ENCODE measurements at regions of chr16 and their contacts with region 1.

Region 1: DNA sequence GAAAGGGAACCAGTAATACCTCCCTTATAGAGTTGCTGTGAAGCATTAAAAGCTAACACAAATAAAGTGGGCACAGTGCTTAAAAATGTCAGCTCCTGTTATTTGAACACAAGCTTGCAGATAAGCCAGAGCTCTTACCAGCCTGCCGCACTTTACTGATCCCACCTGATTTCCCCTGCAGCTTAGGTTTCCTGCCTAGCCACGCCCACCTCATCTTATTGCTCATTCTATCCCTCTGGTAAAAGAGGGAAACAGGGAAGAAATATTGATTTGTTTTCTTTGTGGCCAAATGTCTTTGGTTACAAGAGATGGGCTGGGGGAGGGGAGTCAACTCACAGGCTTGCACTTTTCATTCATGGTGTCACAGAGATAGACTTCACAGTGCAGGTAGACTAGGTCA is 9.6 kb upstream of the GP2 start:
- ATAC-seq: no peak
- H3K4me3 ChIP-seq: no peak overlapping the region
- H3K27ac ChIP-seq: no peak overlapping the region
- H3K4me1 ChIP-seq: no peaks in the 10 kb centered on the region

Region 2: DNA sequence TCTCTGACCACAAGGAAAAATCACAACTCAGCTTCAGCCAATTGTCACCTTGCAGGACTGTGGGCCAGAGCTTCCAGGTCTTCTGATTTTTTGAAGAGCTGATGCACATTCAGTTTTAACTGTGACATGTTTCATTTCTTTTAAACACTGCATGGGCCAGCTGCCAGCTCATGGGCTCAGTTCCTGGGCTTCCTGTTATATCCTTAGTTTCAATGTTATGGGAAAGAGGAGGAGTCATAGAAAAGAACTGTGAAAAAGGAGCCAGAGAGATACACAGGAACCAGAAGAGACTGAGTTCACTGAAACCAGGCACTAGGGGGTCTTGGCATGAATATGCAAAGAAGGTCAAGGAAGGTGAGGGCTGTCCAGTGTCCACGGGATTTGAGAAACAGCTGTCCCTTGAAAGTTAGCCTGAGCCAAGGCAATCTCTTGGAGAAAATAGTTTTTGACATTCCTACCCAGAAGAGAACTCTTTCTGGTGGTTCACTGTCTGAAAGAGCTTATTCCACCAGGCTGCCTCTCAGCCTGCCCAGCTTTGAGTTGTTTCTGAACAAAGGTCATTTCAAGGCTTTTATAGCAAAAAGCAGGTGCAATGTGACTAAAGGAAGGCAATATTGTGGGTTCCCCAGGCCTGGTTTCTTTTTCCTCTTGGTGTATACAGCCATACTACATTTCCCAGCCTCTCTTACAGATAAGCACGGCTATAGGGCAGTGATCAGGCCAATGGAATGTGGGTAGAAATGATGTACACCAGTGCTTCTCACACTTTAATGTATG is 57.0 kb after region 1 on chr16:
- in situ Hi-C with region 1: loop called in 1 of 9 experiments (anchors 10 kb)
- ATAC-seq: peak in 2 of 8 experiments; percentile 32 to 79
- H3K4me3 ChIP-seq: no peak overlapping the region
- H3K27ac ChIP-seq: no peak overlapping the region
- H3K4me1 ChIP-seq: no peaks in the 10 kb centered on the region